ENCODE measurements at regions of chr14 and their contacts with region 1.

Region 1: GRCh38 chr14:75307700-75308379 is 29.2 kb downstream of the FOS start:
- DNase-seq: peak; percentile 86
- H3K4me3 ChIP-seq: no peak overlapping the region
- H3K27ac ChIP-seq: no peak overlapping the region
- H3K4me1 ChIP-seq: peaks cover 9% of the 10 kb centered on the region
- H3K27me3 ChIP-seq: no peaks in the 10 kb centered on the region
- CTCF ChIP-seq: peak; percentile 95

Region 2: GRCh38 chr14:74860906-74861733 is 446.7 kb before region 1 on chr14:
- CTCF ChIA-PET with region 1: no interaction called
- POLR2A ChIA-PET with region 1: no interaction called
- intact Hi-C with region 1: loop called (anchors 5 kb)
- DNase-seq: peak; percentile 90
- H3K4me3 ChIP-seq: no peak overlapping the region
- H3K27ac ChIP-seq: no peak overlapping the region
- H3K4me1 ChIP-seq: peaks cover 4% of the 10 kb centered on the region
- H3K27me3 ChIP-seq: no peaks in the 10 kb centered on the region
- CTCF ChIP-seq: peak; percentile 89

Region 3: GRCh38 chr14:75132382-75133086 is 175.3 kb before region 1 on chr14:
- CTCF ChIA-PET with region 1: interaction called, 3 read pairs
- POLR2A ChIA-PET with region 1: interaction called, 5 read pairs
- intact Hi-C with region 1: loop called (anchors 1 kb)
- DNase-seq: peak; percentile 88
- H3K4me3 ChIP-seq: no peak overlapping the region
- H3K27ac ChIP-seq: peak overlapping the region; percentile 12
- H3K4me1 ChIP-seq: peaks cover 21% of the 10 kb centered on the region
- H3K27me3 ChIP-seq: no peaks in the 10 kb centered on the region
- CTCF ChIP-seq: peak; percentile 78

Region 4: GRCh38 chr14:75234173-75235115 is 73.4 kb before region 1 on chr14:
- CTCF ChIA-PET with region 1: no interaction called
- POLR2A ChIA-PET with region 1: no interaction called
- intact Hi-C with region 1: no loop called
- DNase-seq: no peak
- H3K4me3 ChIP-seq: no peak overlapping the region
- H3K27ac ChIP-seq: no peak overlapping the region
- H3K4me1 ChIP-seq: peaks cover 45% of the 10 kb centered on the region
- H3K27me3 ChIP-seq: no peaks in the 10 kb centered on the region
- CTCF ChIP-seq: no peak

Region 5: DNA sequence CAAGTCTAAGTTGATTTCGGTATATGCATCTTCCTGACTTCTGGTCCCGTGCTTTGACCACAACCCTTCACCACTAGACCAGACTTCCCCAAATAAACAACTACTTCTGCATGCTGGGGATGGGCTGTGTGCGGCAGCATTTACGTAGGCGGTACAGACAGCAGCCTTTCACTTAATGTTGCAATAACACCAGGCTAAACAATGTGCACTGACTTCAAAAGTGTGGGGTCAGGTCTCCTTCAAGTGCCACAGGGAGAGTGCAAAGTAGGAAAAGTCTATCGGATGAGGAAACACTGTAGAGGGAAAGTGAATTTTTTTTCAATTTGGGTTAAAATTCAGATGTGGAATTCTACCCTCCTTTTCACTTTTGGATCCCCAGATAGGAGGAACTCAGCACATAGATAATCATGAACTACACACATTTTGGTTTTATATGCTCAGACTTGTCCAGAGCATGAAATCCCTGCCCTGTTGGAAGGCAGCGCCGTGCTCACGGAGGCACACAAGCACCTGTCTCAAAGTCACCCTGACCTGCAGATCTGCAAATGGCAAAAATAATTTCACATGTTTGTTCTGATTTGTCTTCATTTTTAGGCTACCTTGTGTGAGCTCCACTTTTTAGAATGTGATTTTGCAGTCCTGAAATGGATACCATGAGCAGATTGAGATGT is 32.8 kb before region 1 on chr14:
- CTCF ChIA-PET with region 1: no interaction called
- POLR2A ChIA-PET with region 1: no interaction called
- intact Hi-C with region 1: no loop called
- DNase-seq: no peak
- H3K4me3 ChIP-seq: no peak overlapping the region
- H3K27ac ChIP-seq: no peak overlapping the region
- H3K4me1 ChIP-seq: peaks cover 23% of the 10 kb centered on the region
- H3K27me3 ChIP-seq: no peaks in the 10 kb centered on the region
- CTCF ChIP-seq: no peak

Region 6: GRCh38 chr14:75487155-75487671 is 179.4 kb after region 1 on chr14:
- CTCF ChIA-PET with region 1: interaction called, 17 read pairs
- POLR2A ChIA-PET with region 1: no interaction called
- intact Hi-C with region 1: loop called (anchors 1 kb)
- DNase-seq: no peak
- H3K4me3 ChIP-seq: no peak overlapping the region
- H3K27ac ChIP-seq: no peak overlapping the region
- H3K4me1 ChIP-seq: no peaks in the 10 kb centered on the region
- H3K27me3 ChIP-seq: no peaks in the 10 kb centered on the region
- CTCF ChIP-seq: no peak

Region 7: GRCh38 chr14:75560962-75561432 is 253.2 kb after region 1 on chr14:
- CTCF ChIA-PET with region 1: no interaction called
- POLR2A ChIA-PET with region 1: no interaction called
- intact Hi-C with region 1: loop called (anchors 2 kb)
- DNase-seq: peak; percentile 64
- H3K4me3 ChIP-seq: no peak overlapping the region
- H3K27ac ChIP-seq: no peak overlapping the region
- H3K4me1 ChIP-seq: no peaks in the 10 kb centered on the region
- H3K27me3 ChIP-seq: peaks cover 9% of the 10 kb centered on the region
- CTCF ChIP-seq: peak; percentile 87

Region 8: DNA sequence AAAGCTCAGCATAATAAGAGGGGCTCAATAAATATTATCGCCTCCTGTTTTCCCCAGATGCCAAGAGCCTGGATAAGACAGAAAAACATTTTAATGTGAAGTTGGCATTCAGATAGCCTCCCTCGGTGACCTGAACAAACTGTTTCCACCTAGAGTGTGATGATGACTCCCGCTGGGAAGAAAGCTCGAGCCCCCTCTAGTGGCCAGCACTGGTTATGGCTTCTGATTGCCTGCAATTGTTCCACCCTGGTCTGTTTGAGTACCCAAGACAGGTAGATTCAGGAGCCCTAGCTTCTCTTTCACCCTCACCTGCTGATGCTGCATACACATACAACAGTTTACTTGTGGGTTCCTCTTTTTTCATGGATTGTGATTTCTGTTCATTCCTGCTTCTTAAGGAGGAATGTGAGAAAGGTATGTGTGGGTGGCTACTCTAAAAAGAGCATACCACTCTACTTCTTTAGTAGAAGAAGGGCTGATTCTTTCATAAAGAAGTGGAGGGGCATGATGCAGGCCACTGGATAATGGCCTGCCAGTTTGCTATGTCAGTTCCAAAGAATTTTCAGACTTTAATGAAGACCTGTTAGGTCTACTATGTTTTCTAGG is 346.4 kb after region 1 on chr14:
- CTCF ChIA-PET with region 1: no interaction called
- POLR2A ChIA-PET with region 1: no interaction called
- intact Hi-C with region 1: loop called (anchors 2 kb)
- DNase-seq: peak; percentile 63
- H3K4me3 ChIP-seq: no peak overlapping the region
- H3K27ac ChIP-seq: no peak overlapping the region
- H3K4me1 ChIP-seq: no peaks in the 10 kb centered on the region
- H3K27me3 ChIP-seq: no peaks in the 10 kb centered on the region
- CTCF ChIP-seq: peak; percentile 97

Region 9: GRCh38 chr14:75822522-75823141 is 514.8 kb after region 1 on chr14:
- CTCF ChIA-PET with region 1: no interaction called
- POLR2A ChIA-PET with region 1: no interaction called
- intact Hi-C with region 1: no loop called
- DNase-seq: no peak
- H3K4me3 ChIP-seq: no peak overlapping the region
- H3K27ac ChIP-seq: no peak overlapping the region
- H3K4me1 ChIP-seq: no peaks in the 10 kb centered on the region
- H3K27me3 ChIP-seq: no peaks in the 10 kb centered on the region
- CTCF ChIP-seq: no peak

Region 10: GRCh38 chr14:75982266-75983018 is 674.6 kb after region 1 on chr14:
- CTCF ChIA-PET with region 1: no interaction called
- POLR2A ChIA-PET with region 1: no interaction called
- intact Hi-C with region 1: loop called (anchors 5 kb)
- DNase-seq: peak; percentile 89
- H3K4me3 ChIP-seq: peak overlapping the region; percentile 95
- H3K27ac ChIP-seq: peak overlapping the region; percentile 92
- H3K4me1 ChIP-seq: peaks cover 9% of the 10 kb centered on the region
- H3K27me3 ChIP-seq: no peaks in the 10 kb centered on the region
- CTCF ChIP-seq: peak; percentile 60